ENCODE measurements at regions of chr7 and their contacts with region 1.

Region 1: GRCh38 chr7:2670720-2671391 is 17.1 kb upstream of the AMZ1 start:
- DNase-seq: peak in 1 of 2 experiments; percentile 94
- H3K4me3 ChIP-seq: no peak overlapping the region
- H3K27ac ChIP-seq: no peak overlapping the region
- H3K4me1 ChIP-seq: no peaks in the 10 kb centered on the region
- H3K27me3 ChIP-seq: peaks cover 0 to 7% (median 0%) of the 10 kb centered on the region in 4 experiments; a peak in 2 of 7 replicates
- CTCF ChIP-seq: peak in 2 of 3 experiments; percentile 90 to 94; a peak in 3 of 4 replicates
- EP300 ChIP-seq: no peak
- POLR2A ChIP-seq: no peak
- RAD21 ChIP-seq: peak; percentile 87 to 88

Region 2: DNA sequence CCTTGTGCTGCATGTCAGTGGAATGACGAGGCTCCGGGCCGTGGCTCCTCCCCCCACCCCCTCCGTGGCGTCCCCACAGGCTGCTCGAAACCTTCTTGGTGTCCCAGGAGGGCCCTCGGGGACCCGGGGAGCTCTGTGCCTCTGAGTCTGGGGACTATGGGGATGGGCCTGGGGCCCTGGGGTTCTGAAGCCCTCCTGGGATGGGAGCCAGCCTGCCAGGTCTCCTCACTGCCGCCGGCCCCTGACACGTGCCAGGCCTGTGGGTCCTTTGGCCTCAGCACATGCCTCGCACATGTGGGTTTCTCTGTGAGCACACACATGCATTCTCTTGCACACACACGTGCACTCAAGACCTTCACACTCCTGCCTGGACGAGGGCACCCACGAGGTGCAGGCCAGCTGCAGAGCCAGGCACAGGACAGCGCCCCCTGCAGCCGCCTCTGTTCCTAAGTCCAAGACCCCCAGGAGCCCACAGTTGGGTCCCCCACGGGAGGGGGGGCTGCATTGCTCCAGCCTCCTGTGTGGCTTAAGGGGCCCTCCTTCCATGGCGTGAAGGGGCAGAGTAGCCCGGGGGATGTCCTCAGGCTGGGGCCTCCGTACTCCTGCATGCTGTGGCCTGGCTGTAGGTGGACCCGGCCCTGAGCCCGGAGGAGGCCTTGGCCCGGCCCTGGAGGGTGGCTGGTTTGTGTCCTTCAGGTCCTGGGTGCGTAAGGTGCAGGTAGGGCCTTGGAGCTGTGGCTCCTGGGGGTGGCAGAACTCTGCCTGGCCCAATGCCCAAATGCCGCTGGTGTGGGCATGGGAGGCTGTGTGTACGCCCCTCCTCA is 10.1 kb before region 1 on chr7:
- CTCF ChIA-PET with region 1: interaction called, 14 read pairs
- POLR2A ChIA-PET with region 1: interaction called, 8 read pairs
- DNase-seq: peak in 1 of 2 experiments; percentile 71
- H3K4me3 ChIP-seq: no peak overlapping the region
- H3K27ac ChIP-seq: no peak overlapping the region
- H3K4me1 ChIP-seq: peaks cover 0 to 4% (median under 1%) of the 10 kb centered on the region in 4 experiments; a peak in 2 of 7 replicates
- H3K27me3 ChIP-seq: no peaks in the 10 kb centered on the region; a peak in 2 of 7 replicates
- CTCF ChIP-seq: peak in 2 of 3 experiments; percentile 50 to 60; a peak in 3 of 4 replicates
- EP300 ChIP-seq: no peak
- POLR2A ChIP-seq: no peak
- RAD21 ChIP-seq: peak; percentile 34 to 48; a peak in 3 of 4 replicates

Region 3: GRCh38 chr7:2680792-2681490 is 10.1 kb after region 1 on chr7:
- CTCF ChIA-PET with region 1: interaction called, 59 read pairs
- POLR2A ChIA-PET with region 1: interaction called, 6 read pairs
- DNase-seq: peak; percentile 46 to 95
- H3K4me3 ChIP-seq: no peak overlapping the region
- H3K27ac ChIP-seq: no peak overlapping the region
- H3K4me1 ChIP-seq: no peaks in the 10 kb centered on the region
- H3K27me3 ChIP-seq: no peaks in the 10 kb centered on the region; a peak in 1 of 7 replicates
- CTCF ChIP-seq: peak; percentile 85 to 89 (median 86)
- EP300 ChIP-seq: no peak
- POLR2A ChIP-seq: no peak
- RAD21 ChIP-seq: peak; percentile 84 to 88

Region 4: GRCh38 chr7:2688409-2689331 is 17.8 kb after region 1 on chr7:
- CTCF ChIA-PET with region 1: interaction called, 24 read pairs
- POLR2A ChIA-PET with region 1: no interaction called
- DNase-seq: peak in 1 of 2 experiments; percentile 66
- H3K4me3 ChIP-seq: peak overlapping the region; percentile 25 to 63 (median 46)
- H3K27ac ChIP-seq: no peak overlapping the region
- H3K4me1 ChIP-seq: peaks cover 0 to 11% (median 8%) of the 10 kb centered on the region in 4 experiments; a peak in 5 of 7 replicates
- H3K27me3 ChIP-seq: peaks cover 7 to 34% (median 30%) of the 10 kb centered on the region in 4 experiments
- CTCF ChIP-seq: no peak
- EP300 ChIP-seq: no peak
- POLR2A ChIP-seq: no peak
- RAD21 ChIP-seq: no peak

Region 5: DNA sequence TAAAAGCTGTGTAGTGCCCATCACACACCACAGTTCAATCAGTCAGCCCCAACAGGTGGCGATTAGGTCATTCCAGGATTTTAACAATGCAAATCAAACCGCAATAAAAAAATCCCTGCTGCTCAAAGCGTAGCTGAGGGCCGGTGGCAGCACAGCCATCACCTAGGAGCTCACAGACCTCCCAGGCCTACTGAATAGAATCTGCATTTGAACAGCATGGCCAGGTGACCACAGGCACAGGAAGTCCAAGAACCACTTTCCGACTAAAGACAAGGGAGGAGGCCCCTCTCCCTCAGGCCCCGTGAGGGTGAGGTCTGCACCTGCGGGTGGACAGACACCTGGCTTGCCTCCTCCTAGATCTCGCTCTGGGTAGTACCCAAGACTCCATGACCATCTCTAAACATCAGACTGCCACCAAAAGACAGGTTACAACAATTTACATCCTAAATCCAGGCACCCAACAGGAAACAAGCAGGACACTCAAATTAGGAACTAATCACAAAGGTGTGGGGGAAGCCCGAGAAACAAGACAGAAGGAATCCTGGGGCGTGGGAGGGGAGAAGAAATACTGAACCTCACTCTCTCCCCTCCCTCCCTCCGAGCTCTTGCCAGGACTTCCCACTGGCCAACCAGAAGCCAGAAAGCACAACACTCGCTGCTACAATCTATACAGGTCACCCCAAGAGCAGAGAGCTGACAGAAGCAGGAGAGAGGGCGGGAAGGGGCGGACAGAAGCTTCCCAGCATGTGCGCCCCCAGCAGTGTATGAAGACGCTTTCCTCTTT is 154.0 kb after region 1 on chr7:
- CTCF ChIA-PET with region 1: no interaction called
- POLR2A ChIA-PET with region 1: no interaction called
- DNase-seq: peak in 1 of 2 experiments; percentile 73
- H3K4me3 ChIP-seq: peak overlapping the region in 3 of 4 experiments; percentile 10 to 39 (median 24); a peak in 4 of 8 replicates
- H3K27ac ChIP-seq: peak overlapping the region; percentile 80
- H3K4me1 ChIP-seq: peaks cover 39 to 53% (median 49%) of the 10 kb centered on the region in 4 experiments
- H3K27me3 ChIP-seq: no peaks in the 10 kb centered on the region
- CTCF ChIP-seq: no peak
- EP300 ChIP-seq: peak in 1 of 2 experiments; percentile 3; a peak in 1 of 3 replicates
- POLR2A ChIP-seq: peak; percentile 35 to 39; a peak in 2 of 3 replicates
- RAD21 ChIP-seq: no peak

Region 6: DNA sequence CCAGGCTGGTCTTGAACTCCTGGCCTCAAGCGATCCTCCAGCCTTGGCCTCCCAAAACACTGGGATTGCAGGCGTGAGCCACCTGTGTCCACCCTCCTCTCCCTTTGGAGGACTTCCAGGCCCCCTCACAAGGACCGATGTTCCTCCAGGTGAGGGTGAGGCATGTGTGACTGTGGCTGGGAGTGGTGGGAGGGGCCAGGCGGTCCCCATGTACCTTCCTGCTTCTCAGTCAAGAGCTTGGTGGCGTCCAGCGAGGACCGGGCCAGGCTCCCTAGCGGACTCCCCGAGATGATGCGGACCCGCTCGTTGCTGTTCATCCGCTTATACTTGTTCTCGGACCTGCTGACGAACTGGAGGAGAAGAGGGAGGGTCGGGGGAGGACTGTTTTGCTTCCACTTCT is 244.2 kb after region 1 on chr7:
- CTCF ChIA-PET with region 1: no interaction called
- POLR2A ChIA-PET with region 1: no interaction called
- DNase-seq: no peak
- H3K4me3 ChIP-seq: no peak overlapping the region
- H3K27ac ChIP-seq: no peak overlapping the region
- H3K4me1 ChIP-seq: no peaks in the 10 kb centered on the region
- H3K27me3 ChIP-seq: no peaks in the 10 kb centered on the region; a peak in 1 of 7 replicates
- CTCF ChIP-seq: no peak
- EP300 ChIP-seq: no peak
- POLR2A ChIP-seq: no peak
- RAD21 ChIP-seq: no peak

Measured in H1 (cell line).